ENCODE measurements at regions of chr12 and their contacts with region 1.

Region 1: DNA sequence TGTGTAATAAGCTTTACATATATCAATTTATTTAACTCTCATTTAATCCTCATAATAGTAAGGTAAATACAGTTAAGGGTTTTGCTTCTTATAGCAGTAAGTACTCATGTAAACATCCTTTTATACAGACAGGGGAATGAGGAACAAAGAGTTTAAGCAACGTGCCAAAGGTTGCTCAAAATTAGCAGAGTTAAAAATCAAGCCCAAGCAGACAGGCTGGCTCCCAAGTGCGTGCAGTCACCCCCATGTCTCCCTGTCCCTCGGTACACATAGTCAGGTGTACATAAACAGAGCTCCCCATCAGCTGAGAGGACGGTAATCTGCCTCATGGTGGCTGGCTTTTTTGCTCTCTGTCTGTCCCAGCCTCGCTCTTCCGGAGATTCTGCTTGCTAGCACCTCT is 126.4 kb downstream of the DERA start:
- DNase-seq: no peak
- H3K4me3 ChIP-seq: no peak overlapping the region
- H3K27ac ChIP-seq: no peak overlapping the region
- H3K4me1 ChIP-seq: peaks cover 0 to 5% (median 0%) of the 10 kb centered on the region in 4 donors
- H3K27me3 ChIP-seq: no peaks in the 10 kb centered on the region
- CTCF ChIP-seq: no peak
- EP300 ChIP-seq: no peak
- POLR2A ChIP-seq: no peak

Region 2: GRCh38 chr12:16136219-16136988 is 98.9 kb after region 1 on chr12:
- in situ Hi-C with region 1: no loop called
- intact Hi-C with region 1: loop called (anchors 5 kb)
- DNase-seq: no peak
- H3K4me3 ChIP-seq: no peak overlapping the region
- H3K27ac ChIP-seq: no peak overlapping the region
- H3K4me1 ChIP-seq: no peaks in the 10 kb centered on the region
- H3K27me3 ChIP-seq: no peaks in the 10 kb centered on the region
- CTCF ChIP-seq: no peak
- EP300 ChIP-seq: no peak
- POLR2A ChIP-seq: no peak

Region 3: GRCh38 chr12:16285586-16285985 is 248.1 kb after region 1 on chr12:
- in situ Hi-C with region 1: no loop called
- intact Hi-C with region 1: no loop called
- DNase-seq: no peak
- H3K4me3 ChIP-seq: no peak overlapping the region
- H3K27ac ChIP-seq: no peak overlapping the region
- H3K4me1 ChIP-seq: peaks cover 0 to 10% (median 0%) of the 10 kb centered on the region in 4 donors
- H3K27me3 ChIP-seq: no peaks in the 10 kb centered on the region
- CTCF ChIP-seq: no peak
- EP300 ChIP-seq: no peak
- POLR2A ChIP-seq: no peak